Activated CD8-positive, alpha-beta T cell treated with anti-CD3 and anti-CD28 coated beads, Interleukin-2, amount 10 ng/mL, durations not matched to agents 7 days and 5 days (primary cell): ENCODE measurements at regions of chr6 and their contacts with region 1.

Region 1: DNA sequence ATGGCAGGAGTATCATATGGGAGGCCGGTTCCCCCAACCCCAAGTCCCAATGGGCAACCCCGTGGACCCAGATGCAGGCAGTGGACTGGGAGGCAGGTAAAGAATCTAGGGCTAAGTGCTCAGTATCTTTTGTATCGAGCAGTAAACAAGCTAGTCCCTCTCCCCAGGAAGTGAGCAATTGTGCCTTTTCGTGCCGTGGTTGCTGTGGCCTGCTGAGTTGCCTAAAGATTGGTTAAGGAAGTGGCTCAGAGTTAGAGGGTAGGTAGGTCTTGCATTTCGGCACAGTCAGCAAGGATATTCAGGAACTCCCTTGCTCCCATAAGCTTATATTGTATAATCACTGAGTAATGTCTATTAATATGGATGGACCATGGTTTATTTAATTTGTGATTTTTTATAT is 1.3 kb upstream of the DNAH8 start:
- DNase-seq: peak; percentile 81
- ATAC-seq: peak; percentile 93
- H3K4me3 Mint-ChIP-seq: peak overlapping the region; percentile 20
- H3K27ac Mint-ChIP-seq: peak overlapping the region; percentile 72
- H3K4me1 Mint-ChIP-seq: peaks cover 24% of the 10 kb centered on the region
- H3K27me3 Mint-ChIP-seq: peaks cover 22% of the 10 kb centered on the region

Region 2: GRCh38 chr6:37624121-37624985 is 1089.5 kb before region 1 on chr6:
- CTCF ChIA-PET with region 1: no interaction called
- POLR2A ChIA-PET with region 1: no interaction called
- DNase-seq: no peak
- ATAC-seq: no peak
- H3K4me3 Mint-ChIP-seq: no peak overlapping the region
- H3K27ac Mint-ChIP-seq: no peak overlapping the region
- H3K4me1 Mint-ChIP-seq: peaks cover 32% of the 10 kb centered on the region
- H3K27me3 Mint-ChIP-seq: peaks cover 21% of the 10 kb centered on the region

Region 3: DNA sequence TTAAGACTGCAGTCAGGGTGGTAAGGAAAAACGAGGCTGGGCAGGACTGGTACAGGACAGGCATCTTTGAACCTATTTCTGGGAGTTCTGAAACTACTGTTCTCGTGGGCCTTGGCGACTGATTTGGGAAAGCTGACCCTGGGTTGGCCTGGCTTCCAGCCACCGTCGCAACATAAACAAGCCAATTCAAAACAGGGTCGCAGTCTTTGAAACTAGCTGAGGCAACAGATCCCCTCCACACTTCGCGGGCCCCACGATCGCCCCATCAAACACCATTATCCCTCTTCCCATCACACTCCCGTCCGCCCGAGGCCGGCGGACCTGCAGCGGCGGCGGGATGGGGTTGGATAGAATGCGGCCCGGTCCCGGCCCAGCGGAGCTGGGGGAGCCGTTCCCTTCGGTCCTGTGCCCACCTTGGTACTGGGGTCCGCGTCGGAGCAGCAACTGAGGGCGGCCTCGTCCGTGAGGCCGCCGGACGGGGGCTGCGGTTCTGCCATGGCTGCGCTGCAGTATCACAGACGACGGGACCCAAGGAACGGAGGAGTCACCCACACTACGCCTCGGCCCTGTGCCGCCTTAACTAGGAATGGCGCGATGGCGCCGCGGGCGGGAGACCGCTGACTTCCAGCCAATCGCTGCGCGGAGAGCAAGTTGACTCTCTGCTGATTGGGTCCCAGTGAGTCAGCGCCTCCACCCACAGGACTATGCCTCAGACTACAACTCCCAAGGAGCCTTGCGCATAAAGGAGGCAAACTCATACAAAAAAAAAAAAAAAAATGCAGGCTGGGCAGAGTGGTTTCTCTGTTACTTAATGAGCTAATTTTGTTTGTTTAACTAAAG is 11.0 kb before region 1 on chr6 and contains the start of gene GLO1:
- CTCF ChIA-PET with region 1: interaction called, 9 read pairs
- POLR2A ChIA-PET with region 1: interaction called, 22 read pairs
- DNase-seq: peak; percentile 97
- ATAC-seq: peak; percentile 100
- H3K4me3 Mint-ChIP-seq: peak within 1 kb of the TSS; percentile 85
- H3K27ac Mint-ChIP-seq: peak within 1 kb of the TSS; percentile 85
- H3K4me1 Mint-ChIP-seq: peaks cover 34% of the 10 kb centered on the region
- H3K27me3 Mint-ChIP-seq: peaks cover 9% of the 10 kb centered on the region
- total RNA-seq, gene GLO1: 68.8 to 69.8 TPM

Region 4: GRCh38 chr6:38779310-38780062 is 65.7 kb after region 1 on chr6:
- CTCF ChIA-PET with region 1: no interaction called
- POLR2A ChIA-PET with region 1: no interaction called
- DNase-seq: no peak
- ATAC-seq: no peak
- H3K4me3 Mint-ChIP-seq: no peak overlapping the region
- H3K27ac Mint-ChIP-seq: no peak overlapping the region
- H3K4me1 Mint-ChIP-seq: no peaks in the 10 kb centered on the region
- H3K27me3 Mint-ChIP-seq: peaks cover 23% of the 10 kb centered on the region

Region 5: DNA sequence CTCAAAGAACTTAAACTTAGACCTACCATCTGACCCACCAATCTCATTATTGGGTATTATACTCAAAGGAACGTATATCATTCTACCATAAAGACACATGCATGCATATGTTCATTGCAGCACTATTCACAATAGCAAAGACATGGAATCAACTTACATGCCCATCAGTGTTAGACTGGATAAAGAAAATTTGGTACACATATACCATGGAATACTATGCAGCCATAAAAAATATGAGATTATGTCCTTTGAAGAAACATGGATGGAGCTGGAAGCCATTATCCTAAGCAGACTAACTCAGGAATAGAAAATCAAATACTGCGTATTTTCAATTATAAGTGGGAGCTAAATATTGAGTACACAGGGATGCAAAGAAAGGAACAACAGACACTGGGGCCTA is 168.3 kb after region 1 on chr6:
- CTCF ChIA-PET with region 1: no interaction called
- POLR2A ChIA-PET with region 1: no interaction called
- DNase-seq: no peak
- ATAC-seq: no peak
- H3K4me3 Mint-ChIP-seq: no peak overlapping the region
- H3K27ac Mint-ChIP-seq: no peak overlapping the region
- H3K4me1 Mint-ChIP-seq: no peaks in the 10 kb centered on the region
- H3K27me3 Mint-ChIP-seq: no peaks in the 10 kb centered on the region